K562 (cell line): ENCODE measurements at regions of chr3 and their contacts with region 1.

Region 1: GRCh38 chr3:184289426-184289938 is 9.6 kb upstream of the PSMD2 start:
- DNase-seq: peak; percentile 75 to 82 (median 78)
- ATAC-seq: peak; percentile 90
- H3K4me3 ChIP-seq: no peak overlapping the region
- H3K27ac ChIP-seq: no peak overlapping the region
- H3K4me1 ChIP-seq: peaks cover 0 to 12% of the 10 kb centered on the region in 2 experiments; a peak in 2 of 5 replicates
- H3K27me3 ChIP-seq: peaks cover 23 to 47% of the 10 kb centered on the region in 2 experiments
- CTCF ChIP-seq: peak; percentile 84 to 92 (median 84)
- EP300 ChIP-seq: no peak
- POLR2A ChIP-seq: no peak
- RAD21 ChIP-seq: peak; percentile 76 to 87

Region 2: DNA sequence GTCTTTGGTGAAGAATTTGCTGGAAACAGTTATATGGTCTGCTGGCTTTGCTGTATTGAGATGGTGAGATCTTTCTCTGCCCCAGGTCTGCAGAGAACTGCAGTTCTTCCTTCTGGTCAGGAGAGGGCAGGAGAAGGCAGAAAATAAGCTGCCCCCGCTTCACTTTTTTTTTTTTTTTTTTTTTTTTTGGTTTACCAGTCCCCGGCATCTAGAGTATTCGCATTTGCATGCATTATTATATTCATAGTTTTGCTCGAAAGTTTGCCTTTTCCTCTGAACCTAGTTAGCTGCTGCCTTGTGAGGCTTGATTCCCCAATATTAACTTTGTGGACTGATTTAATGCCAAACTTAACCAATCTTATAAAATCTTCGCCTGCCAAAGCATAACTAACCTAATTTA is 394.2 kb before region 1 on chr3:
- CTCF ChIA-PET with region 1: interaction called, 13 read pairs
- POLR2A ChIA-PET with region 1: no interaction called
- in situ Hi-C with region 1: loop called (anchors 5 kb)
- intact Hi-C with region 1: loop called (anchors 1 kb)
- DNase-seq: peak; percentile 63 to 80 (median 76)
- ATAC-seq: peak; percentile 85
- H3K4me3 ChIP-seq: no peak overlapping the region
- H3K27ac ChIP-seq: no peak overlapping the region
- H3K4me1 ChIP-seq: 0 out of 5 replicates have a peak, but pooled peaks cover 0 to 3% of the 10 kb centered on the region in 2 experiments
- H3K27me3 ChIP-seq: peaks cover 19 to 35% of the 10 kb centered on the region in 2 experiments; a peak in 4 of 5 replicates
- CTCF ChIP-seq: peak; percentile 79 to 95 (median 83)
- EP300 ChIP-seq: no peak
- POLR2A ChIP-seq: no peak
- RAD21 ChIP-seq: peak; percentile 79 to 80

Region 3: DNA sequence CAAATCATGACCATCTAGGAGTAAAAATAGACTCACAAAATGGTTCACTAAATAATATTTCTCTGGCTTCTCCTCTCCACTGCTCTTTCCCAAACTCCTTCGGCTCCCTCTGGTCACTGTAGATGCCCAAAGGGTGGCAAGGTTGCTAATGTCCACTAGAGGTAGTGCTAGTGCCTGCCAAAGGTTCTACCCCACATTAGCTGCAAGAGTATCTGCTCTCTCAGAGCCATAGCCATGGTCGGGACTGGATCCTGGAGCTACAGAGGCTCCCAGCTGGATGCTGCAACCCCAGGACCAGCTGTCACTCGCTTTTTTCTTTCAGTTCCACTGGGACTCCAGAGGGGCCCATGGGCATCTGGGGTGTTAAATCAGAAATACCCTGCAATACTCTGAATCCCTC is 249.5 kb before region 1 on chr3:
- CTCF ChIA-PET with region 1: no interaction called
- POLR2A ChIA-PET with region 1: no interaction called
- in situ Hi-C with region 1: no loop called
- intact Hi-C with region 1: loop called (anchors 5 kb)
- DNase-seq: peak; percentile 22 to 53 (median 34)
- ATAC-seq: peak; percentile 94
- H3K4me3 ChIP-seq: no peak overlapping the region
- H3K27ac ChIP-seq: no peak overlapping the region
- H3K4me1 ChIP-seq: no peaks in the 10 kb centered on the region
- H3K27me3 ChIP-seq: peaks cover 0 to 5% of the 10 kb centered on the region in 2 experiments; a peak in 2 of 5 replicates
- CTCF ChIP-seq: peak; percentile 66 to 79 (median 68)
- EP300 ChIP-seq: no peak
- POLR2A ChIP-seq: no peak
- RAD21 ChIP-seq: peak; percentile 79 to 82

Region 4: DNA sequence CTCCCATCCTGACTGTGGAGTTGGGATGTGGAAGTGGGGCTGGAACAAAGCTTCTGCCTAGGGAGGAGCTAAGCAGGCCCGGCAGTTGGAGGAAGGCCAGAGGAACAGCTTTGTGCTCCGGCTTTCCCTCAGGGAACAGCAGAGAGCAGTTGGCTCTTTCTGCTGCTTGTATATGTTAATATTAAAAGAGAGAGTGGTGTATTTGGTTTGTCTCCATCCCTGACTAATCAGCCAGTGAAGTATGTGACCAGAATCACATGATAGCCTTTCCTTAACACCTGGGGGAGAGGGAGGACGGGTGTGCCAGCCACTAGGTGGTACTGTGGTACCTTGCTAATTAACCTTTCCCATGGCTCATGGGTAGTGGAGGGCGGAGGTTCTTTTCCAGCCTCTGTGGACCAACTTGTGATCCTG is 144.4 kb before region 1 on chr3:
- CTCF ChIA-PET with region 1: no interaction called
- POLR2A ChIA-PET with region 1: no interaction called
- in situ Hi-C with region 1: no loop called
- intact Hi-C with region 1: loop called (anchors 1 kb)
- DNase-seq: peak; percentile 33 to 58 (median 46)
- ATAC-seq: peak; percentile 81
- H3K4me3 ChIP-seq: no peak overlapping the region
- H3K27ac ChIP-seq: no peak overlapping the region
- H3K4me1 ChIP-seq: peaks cover 0 to 3% of the 10 kb centered on the region in 2 experiments; a peak in 2 of 5 replicates
- H3K27me3 ChIP-seq: no peaks in the 10 kb centered on the region
- CTCF ChIP-seq: peak; percentile 52 to 69 (median 59)
- EP300 ChIP-seq: no peak
- POLR2A ChIP-seq: no peak
- RAD21 ChIP-seq: peak; percentile 47 to 65

Region 5: GRCh38 chr3:184227481-184227935 is 62.0 kb before region 1 on chr3:
- CTCF ChIA-PET with region 1: no interaction called
- POLR2A ChIA-PET with region 1: no interaction called
- in situ Hi-C with region 1: no loop called
- intact Hi-C with region 1: loop called (anchors 1 kb)
- DNase-seq: peak; percentile 59 to 80 (median 79)
- ATAC-seq: peak; percentile 84
- H3K4me3 ChIP-seq: no peak overlapping the region
- H3K27ac ChIP-seq: no peak overlapping the region
- H3K4me1 ChIP-seq: peaks cover 0 to 26% of the 10 kb centered on the region in 2 experiments; a peak in 3 of 5 replicates
- H3K27me3 ChIP-seq: peaks cover 41 to 67% of the 10 kb centered on the region in 2 experiments
- CTCF ChIP-seq: peak; percentile 74 to 82 (median 79)
- EP300 ChIP-seq: no peak
- POLR2A ChIP-seq: no peak
- RAD21 ChIP-seq: peak; percentile 32 to 56; a peak in 3 of 4 replicates